Naive thymus-derived CD4-positive, alpha-beta T cell (primary cell): ENCODE measurements at regions of chr11 and their contacts with region 1.

Region 1: DNA sequence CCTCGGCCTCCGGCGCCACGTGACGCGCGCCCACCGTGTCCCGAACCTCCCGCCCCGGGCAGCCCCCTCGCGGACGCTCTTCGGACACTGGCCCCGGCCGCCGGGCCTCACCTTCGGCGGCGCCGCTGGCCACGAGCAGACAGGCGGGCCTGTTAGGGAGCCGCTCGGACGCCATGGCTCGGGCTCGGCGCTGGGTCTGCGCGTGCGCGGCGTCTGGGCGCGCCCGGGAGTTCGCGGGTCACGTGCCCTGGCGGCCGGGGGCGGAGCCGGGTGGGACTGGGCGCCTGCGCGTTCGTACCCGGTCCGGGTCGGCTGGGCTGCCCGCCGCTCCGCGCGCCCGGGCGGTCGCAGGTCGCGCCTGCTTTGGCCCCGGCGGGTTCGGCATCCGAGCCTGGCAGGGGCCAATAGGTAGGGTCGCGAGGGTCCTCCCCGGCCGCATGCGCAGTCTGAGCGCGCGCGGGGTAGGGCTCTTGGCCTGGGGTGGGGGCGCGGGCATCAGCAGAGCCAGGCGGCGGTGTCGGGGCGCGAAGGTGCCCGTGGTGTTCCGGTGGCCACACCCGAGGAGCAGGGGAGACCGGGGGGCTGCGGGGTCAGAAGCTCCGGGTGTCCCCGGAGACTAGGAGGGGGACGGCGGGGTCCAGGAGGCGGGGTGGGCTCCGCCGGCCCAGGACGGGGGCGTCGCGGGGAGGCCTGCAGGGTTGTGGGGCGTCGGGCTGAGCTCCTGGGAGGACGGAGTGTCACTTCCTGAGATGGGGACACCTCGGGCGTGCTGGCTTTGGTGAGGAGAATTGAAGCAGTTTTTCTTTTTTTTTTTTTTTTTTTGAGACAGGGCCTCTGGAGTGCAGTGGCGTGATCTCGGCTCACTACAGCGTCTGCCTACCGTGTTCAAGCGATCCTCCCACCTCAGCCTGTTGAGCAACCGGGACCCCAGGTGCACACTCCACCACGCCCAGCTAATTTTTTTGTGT is at the start of gene GATD1:
- DNase-seq: peak; percentile 86 to 99 (median 93)
- ATAC-seq: peak; percentile 93
- H3K4me3 ChIP-seq: peak within 1 kb of the TSS; percentile 59
- H3K4me3 Mint-ChIP-seq: peak within 1 kb of the TSS; percentile 72 to 91 (median 83)
- H3K27ac ChIP-seq: peak within 1 kb of the TSS; percentile 85
- H3K27ac Mint-ChIP-seq: peak within 1 kb of the TSS; percentile 40 to 92 (median 78)
- H3K4me1 ChIP-seq: peaks cover 12 to 14% of the 10 kb centered on the region in 2 donors
- H3K4me1 Mint-ChIP-seq: peaks cover 7 to 29% (median 23%) of the 10 kb centered on the region in 7 donors
- H3K27me3 ChIP-seq: no peaks in the 10 kb centered on the region
- H3K27me3 Mint-ChIP-seq: no peaks in the 10 kb centered on the region
- total RNA-seq, gene GATD1: 37.8 to 59.2 (median 52.9) TPM

Region 2: GRCh38 chr11:789943-790342 is 12.4 kb after region 1 on chr11 and contains the start of gene CEND1:
- CTCF ChIA-PET with region 1: no interaction called
- POLR2A ChIA-PET with region 1: interaction called, 5 read pairs
- intact Hi-C with region 1: loop called in 1 of 2 experiments (anchors 1 kb)
- DNase-seq: peak in 1 of 9 donors; percentile 68
- ATAC-seq: peak; percentile 60
- H3K4me3 ChIP-seq: no peak within 1 kb of the TSS
- H3K4me3 Mint-ChIP-seq: peak within 1 kb of the TSS in 2 of 10 donors; percentile 48 to 49
- H3K27ac ChIP-seq: no peak within 1 kb of the TSS
- H3K27ac Mint-ChIP-seq: peak within 1 kb of the TSS in 1 of 9 donors; percentile 58
- H3K4me1 ChIP-seq: no peaks in the 10 kb centered on the region
- H3K4me1 Mint-ChIP-seq: peaks cover 0 to 6% (median 0%) of the 10 kb centered on the region in 7 donors
- H3K27me3 ChIP-seq: no peaks in the 10 kb centered on the region
- H3K27me3 Mint-ChIP-seq: no peaks in the 10 kb centered on the region
- total RNA-seq, gene CEND1: 2.3 TPM in 1 of 5 experiments, not detected in the others

Region 3: GRCh38 chr11:1202776-1203504 is 425.4 kb after region 1 on chr11:
- CTCF ChIA-PET with region 1: no interaction called
- POLR2A ChIA-PET with region 1: no interaction called
- intact Hi-C with region 1: no loop called
- DNase-seq: peak in 8 of 9 donors; percentile 34 to 73 (median 60)
- ATAC-seq: peak; percentile 83
- H3K4me3 ChIP-seq: no peak overlapping the region
- H3K4me3 Mint-ChIP-seq: no peak overlapping the region
- H3K27ac ChIP-seq: no peak overlapping the region
- H3K27ac Mint-ChIP-seq: no peak overlapping the region
- H3K4me1 ChIP-seq: no peaks in the 10 kb centered on the region
- H3K4me1 Mint-ChIP-seq: no peaks in the 10 kb centered on the region
- H3K27me3 ChIP-seq: no peaks in the 10 kb centered on the region
- H3K27me3 Mint-ChIP-seq: no peaks in the 10 kb centered on the region